Naive thymus-derived CD4-positive, alpha-beta T cell (primary cell): ENCODE measurements at regions of chr4 and their contacts with region 1.

Region 1: DNA sequence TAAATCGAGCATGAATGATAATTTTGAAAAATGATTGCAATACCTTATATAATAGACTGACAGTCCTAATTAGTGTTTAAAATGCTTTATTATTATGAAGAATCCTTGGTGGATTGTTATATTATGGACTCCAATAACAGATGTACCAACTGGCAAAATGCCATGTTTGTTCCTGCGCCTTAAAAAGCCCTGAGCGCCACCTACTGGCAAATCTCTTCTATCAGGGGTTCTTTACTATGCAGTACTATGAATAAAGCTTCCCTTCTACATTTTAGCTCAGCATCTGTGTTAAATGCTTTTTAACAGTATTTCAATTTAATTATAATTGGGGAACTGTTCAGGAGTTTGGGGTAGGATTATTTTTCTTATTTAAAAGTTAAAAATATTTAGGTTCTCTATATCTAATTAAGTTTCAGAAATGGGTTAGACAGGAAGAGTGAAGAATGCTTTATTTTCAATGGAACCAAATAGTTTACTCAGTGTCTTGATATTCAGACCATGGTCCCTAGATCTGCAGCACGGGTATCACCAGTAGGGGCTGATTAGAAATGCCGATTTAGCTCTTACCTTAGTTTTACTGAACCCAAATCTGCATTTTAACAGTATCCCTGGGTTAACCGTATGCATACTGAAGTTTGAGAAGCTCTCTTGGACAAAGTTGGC is 20.1 kb downstream of the CFAP97 start:
- DNase-seq: peak; percentile 42 to 78 (median 73)
- ATAC-seq: peak; percentile 84
- H3K4me3 ChIP-seq: no peak overlapping the region
- H3K4me3 Mint-ChIP-seq: no peak overlapping the region
- H3K27ac ChIP-seq: no peak overlapping the region
- H3K27ac Mint-ChIP-seq: no peak overlapping the region
- H3K4me1 ChIP-seq: no peaks in the 10 kb centered on the region
- H3K4me1 Mint-ChIP-seq: peaks cover 16 to 63% (median 39%) of the 10 kb centered on the region in 7 donors
- H3K27me3 ChIP-seq: no peaks in the 10 kb centered on the region
- H3K27me3 Mint-ChIP-seq: no peaks in the 10 kb centered on the region

Region 2: GRCh38 chr4:184066584-184067300 is 1117.0 kb before region 1 on chr4:
- CTCF ChIA-PET with region 1: no interaction called
- POLR2A ChIA-PET with region 1: no interaction called
- intact Hi-C with region 1: no loop called
- DNase-seq: no peak
- ATAC-seq: no peak
- H3K4me3 ChIP-seq: no peak overlapping the region
- H3K4me3 Mint-ChIP-seq: no peak overlapping the region
- H3K27ac ChIP-seq: no peak overlapping the region
- H3K27ac Mint-ChIP-seq: no peak overlapping the region
- H3K4me1 ChIP-seq: no peaks in the 10 kb centered on the region
- H3K4me1 Mint-ChIP-seq: no peaks in the 10 kb centered on the region
- H3K27me3 ChIP-seq: no peaks in the 10 kb centered on the region
- H3K27me3 Mint-ChIP-seq: peaks cover 0 to 52% (median 13%) of the 10 kb centered on the region in 5 donors

Region 3: DNA sequence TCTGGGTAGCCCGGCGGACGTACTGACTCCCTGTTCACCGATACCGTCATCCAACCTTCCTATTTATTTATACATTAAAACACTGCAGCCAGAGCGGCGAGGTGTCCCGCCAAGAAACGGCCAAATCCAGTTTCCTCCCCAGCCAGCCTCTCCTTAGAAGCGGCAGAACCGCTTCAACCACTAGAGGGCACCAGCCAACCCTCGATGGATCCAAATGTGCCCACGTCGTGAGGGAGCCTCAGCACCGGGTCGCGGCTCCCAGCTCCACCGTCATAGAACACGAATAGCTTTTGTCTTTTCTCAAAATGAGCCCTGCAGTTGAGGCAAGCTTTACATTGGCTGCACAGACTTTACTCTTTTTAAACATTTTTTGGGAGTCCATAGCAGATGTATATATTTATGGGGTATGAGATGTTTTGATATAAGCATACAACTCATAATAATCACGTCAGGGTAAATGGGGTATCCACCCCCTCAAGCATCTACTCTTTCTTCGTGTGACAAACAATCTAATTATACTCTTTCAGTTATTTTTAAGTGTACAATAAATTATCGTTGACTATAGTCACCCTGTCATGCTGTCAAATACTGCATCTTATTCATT is 178.4 kb before region 1 on chr4:
- CTCF ChIA-PET with region 1: interaction called, 7 read pairs
- POLR2A ChIA-PET with region 1: no interaction called
- intact Hi-C with region 1: loop called (anchors 1 to 2 kb)
- DNase-seq: peak; percentile 45 to 78 (median 66)
- ATAC-seq: peak; percentile 93
- H3K4me3 ChIP-seq: peak overlapping the region; percentile 2
- H3K4me3 Mint-ChIP-seq: peak overlapping the region; percentile 25 to 71 (median 60)
- H3K27ac ChIP-seq: no peak overlapping the region
- H3K27ac Mint-ChIP-seq: peak overlapping the region in 1 of 9 donors; percentile 8
- H3K4me1 ChIP-seq: peaks cover 0 to 3% of the 10 kb centered on the region in 2 donors
- H3K4me1 Mint-ChIP-seq: peaks cover 6 to 9% (median 7%) of the 10 kb centered on the region in 7 donors
- H3K27me3 ChIP-seq: no peaks in the 10 kb centered on the region
- H3K27me3 Mint-ChIP-seq: peaks cover 47 to 54% (median 52%) of the 10 kb centered on the region in 5 donors

Region 4: DNA sequence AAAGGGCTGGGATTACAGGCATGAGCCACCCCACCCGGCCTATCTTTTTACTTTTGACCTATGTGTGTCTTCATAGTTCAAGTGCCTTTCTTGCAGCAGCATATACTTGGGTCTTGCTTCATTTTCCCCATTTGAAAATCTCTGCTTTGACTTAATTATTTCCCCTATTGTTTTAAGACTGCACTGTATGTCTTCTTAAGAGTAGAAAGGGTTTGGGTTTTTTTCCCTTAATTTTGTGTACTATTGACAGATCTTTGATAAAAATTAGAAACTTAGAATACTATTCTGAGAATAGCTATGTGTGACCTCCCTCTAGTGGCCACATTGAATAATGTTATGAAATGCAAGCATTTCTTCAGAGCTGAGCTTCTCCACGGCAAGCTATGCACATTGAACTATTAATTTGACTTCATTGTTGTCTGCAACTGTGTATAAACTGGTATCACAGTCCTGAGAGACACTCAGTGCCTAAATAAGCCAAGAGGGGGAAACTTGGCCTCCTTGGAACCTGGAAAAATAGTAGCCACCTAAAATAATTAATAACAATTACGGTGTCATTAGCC is 49.4 kb before region 1 on chr4:
- CTCF ChIA-PET with region 1: interaction called, 5 read pairs
- POLR2A ChIA-PET with region 1: no interaction called
- intact Hi-C with region 1: loop called (anchors 1 kb)
- DNase-seq: peak in 6 of 9 donors; percentile 22 to 52 (median 40)
- ATAC-seq: peak; percentile 86
- H3K4me3 ChIP-seq: no peak overlapping the region
- H3K4me3 Mint-ChIP-seq: no peak overlapping the region
- H3K27ac ChIP-seq: no peak overlapping the region
- H3K27ac Mint-ChIP-seq: no peak overlapping the region
- H3K4me1 ChIP-seq: no peaks in the 10 kb centered on the region
- H3K4me1 Mint-ChIP-seq: no peaks in the 10 kb centered on the region
- H3K27me3 ChIP-seq: peaks cover 0 to 3% of the 10 kb centered on the region in 2 donors
- H3K27me3 Mint-ChIP-seq: peaks cover 29 to 68% (median 40%) of the 10 kb centered on the region in 5 donors

Region 5: GRCh38 chr4:185196437-185196836 is 12.7 kb after region 1 on chr4:
- CTCF ChIA-PET with region 1: interaction called, 16 read pairs
- POLR2A ChIA-PET with region 1: interaction called, 4 read pairs
- intact Hi-C with region 1: no loop called
- DNase-seq: no peak
- ATAC-seq: no peak
- H3K4me3 ChIP-seq: no peak overlapping the region
- H3K4me3 Mint-ChIP-seq: no peak overlapping the region
- H3K27ac ChIP-seq: no peak overlapping the region
- H3K27ac Mint-ChIP-seq: no peak overlapping the region
- H3K4me1 ChIP-seq: no peaks in the 10 kb centered on the region
- H3K4me1 Mint-ChIP-seq: peaks cover 12 to 54% (median 35%) of the 10 kb centered on the region in 7 donors
- H3K27me3 ChIP-seq: no peaks in the 10 kb centered on the region
- H3K27me3 Mint-ChIP-seq: no peaks in the 10 kb centered on the region

Region 6: DNA sequence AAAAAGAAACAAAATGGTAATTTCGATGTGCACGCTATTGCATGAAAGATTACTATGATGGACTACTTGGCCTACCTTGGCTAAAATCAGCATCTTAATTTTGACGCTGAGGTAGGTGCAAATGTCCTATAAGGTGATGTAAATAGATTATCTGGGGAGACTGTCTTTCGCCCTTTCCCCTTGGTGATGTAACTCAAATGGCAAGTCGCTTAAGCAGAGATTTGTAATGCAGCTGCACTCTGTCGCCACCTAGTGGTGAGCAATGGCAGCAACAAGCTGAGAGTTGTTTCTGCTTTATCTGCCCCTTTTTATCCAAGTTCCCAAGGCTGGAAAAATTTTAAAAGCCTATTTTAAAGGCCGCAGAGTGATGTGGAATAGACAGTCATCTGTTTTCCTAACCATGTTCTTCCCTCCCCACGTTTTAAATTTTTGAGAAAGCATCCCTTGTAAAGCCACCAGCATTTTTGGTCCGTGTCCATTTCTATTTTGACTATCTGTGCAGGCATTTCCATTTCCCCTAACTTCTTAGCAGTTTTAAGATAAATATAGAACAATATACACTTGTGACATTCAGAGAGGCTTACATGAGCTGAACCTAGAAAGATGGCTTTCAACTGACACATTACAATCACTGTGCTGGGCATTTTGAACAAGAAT is 413.9 kb after region 1 on chr4:
- CTCF ChIA-PET with region 1: no interaction called
- POLR2A ChIA-PET with region 1: no interaction called
- intact Hi-C with region 1: loop called in 1 of 2 experiments (anchors 2 kb)
- DNase-seq: peak; percentile 42 to 60 (median 56)
- ATAC-seq: peak; percentile 87
- H3K4me3 ChIP-seq: no peak overlapping the region
- H3K4me3 Mint-ChIP-seq: no peak overlapping the region
- H3K27ac ChIP-seq: no peak overlapping the region
- H3K27ac Mint-ChIP-seq: no peak overlapping the region
- H3K4me1 ChIP-seq: no peaks in the 10 kb centered on the region
- H3K4me1 Mint-ChIP-seq: peaks cover 0 to 4% (median 0%) of the 10 kb centered on the region in 7 donors
- H3K27me3 ChIP-seq: peaks cover 4 to 5% of the 10 kb centered on the region in 2 donors
- H3K27me3 Mint-ChIP-seq: peaks cover 18 to 33% (median 25%) of the 10 kb centered on the region in 5 donors